Prostate gland (tissue), 2 donors: ENCODE measurements at regions of chr14 and their contacts with region 1.

Region 1: GRCh38 chr14:34722717-34723545 is 8.5 kb upstream of the CFL2 start:
- DNase-seq: peak; percentile 35
- H3K4me3 ChIP-seq: no peak overlapping the region
- H3K27ac ChIP-seq: peak overlapping the region in 1 of 2 donors; percentile 35
- H3K4me1 ChIP-seq: no peaks in the 10 kb centered on the region
- H3K27me3 ChIP-seq: no peaks in the 10 kb centered on the region
- CTCF ChIP-seq: peak; percentile 66 to 78 (median 76)
- POLR2A ChIP-seq: no peak

Region 2: GRCh38 chr14:34671716-34672115 is 51.2 kb before region 1 on chr14:
- intact Hi-C with region 1: loop called (anchors 1 kb)
- DNase-seq: no peak
- H3K4me3 ChIP-seq: no peak overlapping the region
- H3K27ac ChIP-seq: no peak overlapping the region
- H3K4me1 ChIP-seq: no peaks in the 10 kb centered on the region
- H3K27me3 ChIP-seq: no peaks in the 10 kb centered on the region
- CTCF ChIP-seq: no peak
- POLR2A ChIP-seq: no peak

Region 3: GRCh38 chr14:34875031-34875922 is 152.3 kb after region 1 on chr14 and contains the start of gene BAZ1A:
- intact Hi-C with region 1: loop called (anchors 5 kb)
- DNase-seq: peak; percentile 78
- H3K4me3 ChIP-seq: peak within 1 kb of the TSS; percentile 73 to 80
- H3K27ac ChIP-seq: peak within 1 kb of the TSS; percentile 99 to 100
- H3K4me1 ChIP-seq: no peaks in the 10 kb centered on the region
- H3K27me3 ChIP-seq: no peaks in the 10 kb centered on the region
- CTCF ChIP-seq: peak in 2 of 4 experiments; percentile 30 to 42
- POLR2A ChIP-seq: peak; percentile 97
- total RNA-seq, gene BAZ1A: 25.3 to 31.5 TPM